ENCODE measurements at regions of chr3 and their contacts with region 1.

Region 1: GRCh38 chr3:196432137-196432879 is at the start of gene UBXN7:
- DNase-seq: peak; percentile 98
- H3K4me3 ChIP-seq: peak within 1 kb of the TSS; percentile 92 to 99 (median 97)
- H3K27ac ChIP-seq: peak within 1 kb of the TSS; percentile 93 to 97 (median 96)
- H3K4me1 ChIP-seq: peaks cover 21 to 33% (median 27%) of the 10 kb centered on the region in 4 donors
- H3K27me3 ChIP-seq: no peaks in the 10 kb centered on the region
- CTCF ChIP-seq: no peak
- EP300 ChIP-seq: no peak
- POLR2A ChIP-seq: no peak
- total RNA-seq, gene UBXN7: 15.6 to 23.7 (median 17.2) TPM

Region 2: DNA sequence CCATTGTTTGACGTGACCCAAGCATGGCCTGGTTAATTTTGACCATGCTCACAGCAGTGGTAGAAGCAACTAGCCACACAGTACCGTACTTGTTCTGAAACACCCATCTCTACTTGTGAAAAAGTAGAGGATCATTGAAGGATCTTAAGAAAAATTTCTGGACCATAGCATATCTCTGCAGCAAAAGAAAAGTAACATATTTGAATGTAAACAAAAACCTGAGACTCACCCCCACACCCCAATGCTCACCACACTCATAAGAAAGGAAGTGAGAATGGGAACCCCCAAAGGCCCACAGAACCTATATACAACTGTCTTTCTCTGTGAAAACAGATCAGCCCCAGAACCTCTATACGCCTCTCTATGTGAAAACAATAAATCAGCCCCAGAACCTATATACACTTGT is 316.6 kb before region 1 on chr3:
- intact Hi-C with region 1: no loop called
- DNase-seq: no peak
- H3K4me3 ChIP-seq: no peak overlapping the region
- H3K27ac ChIP-seq: no peak overlapping the region
- H3K4me1 ChIP-seq: no peaks in the 10 kb centered on the region
- H3K27me3 ChIP-seq: no peaks in the 10 kb centered on the region
- CTCF ChIP-seq: no peak
- EP300 ChIP-seq: no peak
- POLR2A ChIP-seq: no peak

Region 3: GRCh38 chr3:196501316-196502044 is 69.2 kb after region 1 on chr3:
- intact Hi-C with region 1: loop called (anchors 2 kb)
- DNase-seq: no peak
- H3K4me3 ChIP-seq: peak overlapping the region; percentile 81 to 95 (median 90)
- H3K27ac ChIP-seq: peak overlapping the region; percentile 95 to 99 (median 97)
- H3K4me1 ChIP-seq: peaks cover 22 to 47% (median 39%) of the 10 kb centered on the region in 4 donors
- H3K27me3 ChIP-seq: no peaks in the 10 kb centered on the region
- CTCF ChIP-seq: no peak
- EP300 ChIP-seq: no peak
- POLR2A ChIP-seq: no peak

Measured in esophagus muscularis mucosa (tissue), 4 donors.